ENCODE measurements at regions of chr1 and their contacts with region 1.

Region 1: DNA sequence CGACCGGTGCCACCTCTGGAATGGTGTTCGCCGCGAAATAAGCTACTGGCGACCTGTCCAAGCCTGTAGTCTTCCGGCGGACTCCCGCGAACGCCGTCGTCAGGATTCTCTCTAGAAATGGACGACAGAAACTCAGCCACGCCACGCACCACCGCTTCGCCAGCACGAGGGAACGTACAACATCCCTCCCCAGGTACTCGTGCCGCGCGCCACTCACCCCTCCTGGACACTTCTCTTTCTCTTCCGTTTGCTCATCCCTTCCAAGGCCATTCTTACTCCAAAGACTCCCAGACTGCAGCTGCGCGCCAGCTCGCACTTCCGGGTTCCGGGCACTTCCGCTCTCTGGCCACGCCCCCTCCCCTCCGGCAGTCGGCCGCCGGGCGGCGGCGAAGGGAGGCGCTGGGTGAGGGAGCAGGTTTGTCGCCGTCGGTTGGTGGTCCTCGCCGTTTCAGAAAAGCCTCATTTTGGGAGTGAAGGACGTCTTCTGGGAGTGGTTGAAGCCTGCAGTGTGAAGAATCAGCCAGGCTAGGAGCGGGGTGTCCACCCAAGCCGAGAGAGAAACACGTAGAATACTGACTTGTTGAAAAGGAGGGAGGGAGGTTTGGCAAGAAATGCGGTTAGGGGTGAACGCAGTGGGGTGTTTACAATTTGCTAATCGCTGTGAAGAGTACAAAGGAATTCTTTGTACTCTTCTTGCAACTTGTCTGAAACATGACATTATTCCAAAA is at the start of gene RBM34:
- DNase-seq: peak; percentile 95
- H3K4me3 ChIP-seq: peak within 1 kb of the TSS; percentile 64 to 82 (median 76)
- H3K27ac ChIP-seq: peak within 1 kb of the TSS; percentile 89 to 91 (median 90)
- H3K4me1 ChIP-seq: peaks cover 0 to 31% (median 20%) of the 10 kb centered on the region in 4 donors
- H3K27me3 ChIP-seq: no peaks in the 10 kb centered on the region
- CTCF ChIP-seq: peak in 2 of 4 experiments; percentile 26 to 30
- EP300 ChIP-seq: no peak
- POLR2A ChIP-seq: peak; percentile 98 to 99
- total RNA-seq, gene RBM34: 46.4 to 83.9 (median 51.8) TPM

Region 2: GRCh38 chr1:235128456-235129328 is 32.4 kb before region 1 on chr1 and contains the start of gene TOMM20:
- intact Hi-C with region 1: loop called (anchors 2 kb)
- DNase-seq: peak; percentile 99
- H3K4me3 ChIP-seq: peak within 1 kb of the TSS; percentile 78 to 94 (median 81)
- H3K27ac ChIP-seq: peak within 1 kb of the TSS; percentile 88 to 92 (median 91)
- H3K4me1 ChIP-seq: peaks cover 0 to 30% (median 26%) of the 10 kb centered on the region in 4 donors
- H3K27me3 ChIP-seq: no peaks in the 10 kb centered on the region
- CTCF ChIP-seq: no peak
- EP300 ChIP-seq: peak in 1 of 4 donors; percentile 73
- POLR2A ChIP-seq: peak; percentile 54 to 72
- total RNA-seq, gene TOMM20: 72.0 to 128 (median 112) TPM

Measured in sigmoid colon (tissue), 7 donors.